Caco-2 (cell line): ENCODE measurements at regions of chr12 and their contacts with region 1.

Region 1: GRCh38 chr12:51951199-51951842 is at the start of gene ACVR1B:
- DNase-seq: peak; percentile 93 to 94
- H3K4me3 ChIP-seq: peak within 1 kb of the TSS; percentile 72
- H3K4me3 Mint-ChIP-seq: peak within 1 kb of the TSS; percentile 87
- H3K27ac Mint-ChIP-seq: peak within 1 kb of the TSS; percentile 78
- H3K4me1 ChIP-seq: peaks cover 28% of the 10 kb centered on the region
- H3K4me1 Mint-ChIP-seq: peaks cover 33% of the 10 kb centered on the region
- H3K27me3 ChIP-seq: no peaks in the 10 kb centered on the region
- H3K27me3 Mint-ChIP-seq: no peaks in the 10 kb centered on the region
- CTCF ChIP-seq: no peak
- total RNA-seq, gene ACVR1B: 92.7 and 112 TPM in 2 replicates

Region 2: GRCh38 chr12:51814311-51815088 is 136.8 kb before region 1 on chr12:
- CTCF ChIA-PET with region 1: no interaction called
- POLR2A ChIA-PET with region 1: no interaction called
- intact Hi-C with region 1: no loop called
- DNase-seq: peak; percentile 83 to 93
- H3K4me3 ChIP-seq: peak overlapping the region; percentile 66
- H3K4me3 Mint-ChIP-seq: peak overlapping the region; percentile 67
- H3K27ac Mint-ChIP-seq: peak overlapping the region; percentile 9
- H3K4me1 ChIP-seq: peaks cover 11% of the 10 kb centered on the region
- H3K4me1 Mint-ChIP-seq: peaks cover 18% of the 10 kb centered on the region
- H3K27me3 ChIP-seq: no peaks in the 10 kb centered on the region
- H3K27me3 Mint-ChIP-seq: no peaks in the 10 kb centered on the region
- CTCF ChIP-seq: peak; percentile 62 to 85

Region 3: DNA sequence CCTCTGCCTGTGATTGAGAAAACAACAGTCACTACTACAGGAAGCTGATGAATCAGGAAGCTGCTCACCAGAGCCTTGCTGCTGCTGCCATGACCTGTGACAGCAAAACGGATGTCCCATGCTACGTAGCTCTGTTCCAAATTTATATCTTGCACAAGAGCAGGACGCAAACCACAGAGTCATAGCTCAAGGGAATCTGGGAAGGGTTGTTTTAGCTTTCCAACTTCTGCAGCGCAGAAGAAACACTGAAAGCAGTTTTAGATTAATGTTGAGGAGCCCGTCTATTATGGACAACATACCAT is 65.3 kb before region 1 on chr12:
- CTCF ChIA-PET with region 1: no interaction called
- POLR2A ChIA-PET with region 1: no interaction called
- intact Hi-C with region 1: no loop called
- DNase-seq: peak in 1 of 2 experiments; percentile 27
- H3K4me3 ChIP-seq: no peak overlapping the region
- H3K4me3 Mint-ChIP-seq: no peak overlapping the region
- H3K27ac Mint-ChIP-seq: no peak overlapping the region
- H3K4me1 ChIP-seq: peaks cover 10% of the 10 kb centered on the region
- H3K4me1 Mint-ChIP-seq: peaks cover 17% of the 10 kb centered on the region
- H3K27me3 ChIP-seq: no peaks in the 10 kb centered on the region
- H3K27me3 Mint-ChIP-seq: no peaks in the 10 kb centered on the region
- CTCF ChIP-seq: no peak

Region 4: GRCh38 chr12:51926718-51927117 is 24.6 kb before region 1 on chr12:
- CTCF ChIA-PET with region 1: no interaction called
- POLR2A ChIA-PET with region 1: no interaction called
- intact Hi-C with region 1: loop called (anchors 1 kb)
- DNase-seq: peak; percentile 69 to 70
- H3K4me3 ChIP-seq: no peak overlapping the region
- H3K4me3 Mint-ChIP-seq: no peak overlapping the region
- H3K27ac Mint-ChIP-seq: no peak overlapping the region
- H3K4me1 ChIP-seq: peaks cover 30% of the 10 kb centered on the region
- H3K4me1 Mint-ChIP-seq: peaks cover 26% of the 10 kb centered on the region
- H3K27me3 ChIP-seq: no peaks in the 10 kb centered on the region
- H3K27me3 Mint-ChIP-seq: no peaks in the 10 kb centered on the region
- CTCF ChIP-seq: peak; percentile 64 to 70